ENCODE measurements at regions of chr1 and their contacts with region 1.

Region 1: GRCh38 chr1:36385410-36386257 is at the start of gene STK40:
- DNase-seq: peak; percentile 99
- H3K4me3 Mint-ChIP-seq: peak within 1 kb of the TSS; percentile 92
- H3K27ac Mint-ChIP-seq: peak within 1 kb of the TSS; percentile 99
- H3K4me1 Mint-ChIP-seq: peaks cover 62% of the 10 kb centered on the region
- H3K27me3 Mint-ChIP-seq: no peaks in the 10 kb centered on the region
- total RNA-seq, gene STK40: 40.6 and 51.3 TPM in 2 replicates

Region 2: DNA sequence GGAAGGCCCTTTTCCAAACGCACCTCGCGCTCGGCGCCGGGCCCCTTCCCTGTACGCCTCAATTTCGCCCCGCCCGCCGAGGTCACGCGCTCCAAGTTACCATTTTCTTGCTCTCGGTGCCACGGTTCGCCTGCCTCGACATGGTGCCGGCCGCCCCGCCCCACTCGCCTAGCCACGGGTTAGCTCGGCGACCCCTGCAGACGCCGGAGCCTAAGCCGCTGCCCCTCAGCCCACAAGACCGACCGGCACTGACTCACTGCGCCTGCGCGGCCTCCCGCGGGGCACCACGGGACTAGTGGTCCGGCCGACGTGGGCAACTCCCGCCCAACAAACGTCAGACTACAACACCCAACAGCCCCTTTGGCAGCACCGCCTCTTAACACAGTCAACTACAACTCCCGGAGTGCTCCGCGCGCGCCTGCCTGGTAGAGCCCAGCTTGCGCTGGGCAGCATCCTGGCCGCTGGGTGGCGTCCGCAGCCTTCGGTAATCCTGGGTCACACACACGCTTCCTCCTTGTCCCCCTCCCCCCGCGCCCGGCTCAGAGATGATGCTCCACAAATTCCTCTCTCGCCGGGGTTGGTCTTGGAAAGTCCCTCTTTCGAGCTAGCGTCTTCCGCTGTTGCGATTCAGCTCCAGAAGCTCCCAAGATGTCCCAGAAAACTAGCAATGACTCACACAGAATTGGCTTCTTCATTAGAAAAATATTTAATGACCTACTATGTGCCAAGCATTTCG is 236.2 kb before region 1 on chr1 and contains the start of gene TRAPPC3:
- intact Hi-C with region 1: loop called (anchors 1 kb)
- DNase-seq: peak; percentile 100
- H3K4me3 Mint-ChIP-seq: peak within 1 kb of the TSS; percentile 98
- H3K27ac Mint-ChIP-seq: peak within 1 kb of the TSS; percentile 98
- H3K4me1 Mint-ChIP-seq: peaks cover 54% of the 10 kb centered on the region
- H3K27me3 Mint-ChIP-seq: no peaks in the 10 kb centered on the region
- total RNA-seq, gene TRAPPC3: 71.2 and 72.4 TPM in 2 replicates

Region 3: GRCh38 chr1:36306902-36307456 is 78.7 kb before region 1 on chr1:
- intact Hi-C with region 1: loop called (anchors 5 kb)
- DNase-seq: peak; percentile 99
- H3K4me3 Mint-ChIP-seq: peak overlapping the region; percentile 93
- H3K27ac Mint-ChIP-seq: peak overlapping the region; percentile 95
- H3K4me1 Mint-ChIP-seq: peaks cover 43% of the 10 kb centered on the region
- H3K27me3 Mint-ChIP-seq: no peaks in the 10 kb centered on the region

Region 4: DNA sequence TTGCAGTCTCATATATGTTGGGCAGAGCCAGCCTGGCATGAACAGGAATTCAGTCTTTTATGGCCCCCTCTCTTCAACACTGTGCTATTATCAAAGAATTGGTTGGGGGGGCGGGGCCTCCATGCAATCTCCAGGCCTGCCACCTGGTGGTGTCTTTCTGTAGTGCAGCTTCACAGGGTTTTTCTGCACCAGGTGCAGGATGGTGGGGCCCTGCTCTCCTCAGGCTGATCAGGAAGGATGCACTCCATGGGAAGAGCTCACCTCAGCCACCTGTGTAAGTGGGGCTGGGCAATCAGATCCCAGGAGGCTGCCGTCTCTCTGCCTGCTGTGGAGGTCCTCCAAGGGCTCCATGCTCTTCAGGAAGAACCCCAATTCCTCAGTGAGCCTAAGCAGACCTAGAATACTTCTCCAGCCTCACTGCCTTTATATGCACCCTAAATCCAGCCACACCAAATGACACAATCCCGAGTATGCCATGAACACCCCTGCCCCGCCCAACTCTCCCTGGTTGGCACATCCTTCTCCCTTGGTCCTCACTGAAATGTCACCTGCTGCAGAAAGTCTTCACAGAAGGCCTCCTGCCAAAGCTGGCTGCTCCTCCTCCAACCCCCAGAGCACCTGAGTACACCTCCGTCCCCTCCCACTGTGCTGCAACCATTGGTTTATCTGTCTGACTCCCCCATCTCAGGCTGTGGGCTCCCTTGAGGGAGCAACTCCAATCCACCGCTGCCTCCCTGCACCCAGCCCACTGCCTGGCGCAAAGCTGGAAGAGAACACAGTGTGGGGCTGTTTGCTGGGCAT is 16.4 kb before region 1 on chr1:
- intact Hi-C with region 1: no loop called
- DNase-seq: peak; percentile 95
- H3K4me3 Mint-ChIP-seq: no peak overlapping the region
- H3K27ac Mint-ChIP-seq: peak overlapping the region; percentile 78
- H3K4me1 Mint-ChIP-seq: peaks cover 55% of the 10 kb centered on the region
- H3K27me3 Mint-ChIP-seq: no peaks in the 10 kb centered on the region

Region 5: DNA sequence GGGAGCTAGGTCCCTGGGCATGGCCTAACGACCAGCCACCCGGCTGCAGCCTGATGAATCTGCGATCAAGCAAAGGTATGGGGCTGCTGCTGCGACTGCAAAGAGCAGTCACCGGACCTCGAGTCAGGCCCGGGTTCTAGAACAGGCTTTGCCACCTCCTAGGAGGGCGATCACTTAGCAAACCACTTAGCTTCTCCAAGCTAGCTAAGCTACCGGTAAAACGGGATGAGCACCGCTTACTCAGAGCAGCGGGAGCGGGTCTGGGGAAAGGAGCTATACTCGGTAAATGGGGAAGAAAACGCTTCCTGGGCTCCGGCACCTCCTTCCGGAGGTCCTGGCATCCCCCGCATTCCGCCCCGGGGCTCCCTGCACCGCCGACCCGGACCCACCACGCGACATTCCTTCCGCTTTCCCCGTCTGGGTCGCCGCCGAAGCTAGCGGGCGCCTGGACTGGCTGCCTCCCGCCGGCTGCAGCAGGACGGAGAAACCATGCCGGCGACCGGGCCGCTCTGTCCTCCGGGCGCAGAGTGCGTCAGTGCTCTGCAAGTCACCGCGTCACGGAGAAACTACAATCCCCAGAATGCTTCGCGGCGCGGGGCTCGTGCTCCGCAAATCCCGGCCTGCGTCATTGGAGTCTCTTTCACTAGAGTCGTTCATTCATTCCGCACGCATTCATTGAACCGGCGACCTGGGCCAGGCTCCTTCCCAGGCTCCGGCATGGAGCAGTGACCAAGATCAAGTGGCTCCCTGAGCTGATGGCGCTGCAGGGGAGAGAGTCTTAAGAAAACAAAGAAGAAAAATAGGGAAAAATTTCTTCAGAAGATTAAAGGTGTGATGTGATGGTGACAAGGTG is 12.0 kb after region 1 on chr1 and contains the start of gene LSM10:
- intact Hi-C with region 1: loop called (anchors 1 kb)
- DNase-seq: peak; percentile 97
- H3K4me3 Mint-ChIP-seq: peak within 1 kb of the TSS; percentile 96
- H3K27ac Mint-ChIP-seq: peak within 1 kb of the TSS; percentile 98
- H3K4me1 Mint-ChIP-seq: peaks cover 19% of the 10 kb centered on the region
- H3K27me3 Mint-ChIP-seq: no peaks in the 10 kb centered on the region
- total RNA-seq, gene LSM10: 58.6 and 61.6 TPM in 2 replicates

Region 6: GRCh38 chr1:36463803-36464604 is 78.4 kb after region 1 on chr1 and contains the start of gene MRPS15:
- intact Hi-C with region 1: loop called (anchors 5 kb)
- DNase-seq: peak; percentile 99
- H3K4me3 Mint-ChIP-seq: peak within 1 kb of the TSS; percentile 99
- H3K27ac Mint-ChIP-seq: peak within 1 kb of the TSS; percentile 98
- H3K4me1 Mint-ChIP-seq: peaks cover 39% of the 10 kb centered on the region
- H3K27me3 Mint-ChIP-seq: no peaks in the 10 kb centered on the region
- total RNA-seq, gene MRPS15: 117 and 126 TPM in 2 replicates

Region 7: DNA sequence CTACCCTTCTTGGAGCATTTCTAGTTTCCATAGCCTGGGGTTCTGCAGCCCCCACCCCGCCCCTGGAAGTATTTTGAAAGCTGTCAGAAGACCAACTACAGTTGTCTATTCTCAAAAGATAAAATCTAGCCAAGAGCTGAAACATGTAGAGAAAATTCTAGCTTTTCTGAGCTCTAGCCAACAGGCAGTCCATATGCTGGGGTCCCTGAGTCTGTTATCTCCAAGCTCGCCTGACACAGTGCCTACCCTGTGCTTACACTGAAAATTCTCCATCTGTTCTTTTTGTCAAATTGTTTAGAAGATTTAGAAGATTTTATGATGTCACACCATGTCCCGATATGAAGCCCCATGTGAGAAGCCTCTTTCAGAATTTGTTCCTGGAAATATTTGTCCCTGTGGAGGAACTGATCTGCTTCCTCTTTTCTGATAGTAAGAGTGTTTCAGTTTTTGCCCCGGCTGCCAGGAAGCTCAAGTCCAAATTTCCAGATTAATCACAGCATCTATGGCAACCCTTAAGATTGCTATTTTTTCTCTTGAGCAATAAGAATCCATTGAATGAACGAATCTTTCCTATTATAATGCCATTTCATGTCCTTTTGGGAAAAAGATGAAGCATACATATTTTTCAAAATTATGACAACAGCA is 120.8 kb after region 1 on chr1:
- intact Hi-C with region 1: no loop called
- DNase-seq: no peak
- H3K4me3 Mint-ChIP-seq: no peak overlapping the region
- H3K27ac Mint-ChIP-seq: no peak overlapping the region
- H3K4me1 Mint-ChIP-seq: no peaks in the 10 kb centered on the region
- H3K27me3 Mint-ChIP-seq: peaks cover 25% of the 10 kb centered on the region

Measured in activated CD4-positive, alpha-beta T cell treated with anti-CD3 and anti-CD28 coated beads, Interleukin-2, amount 10 ng/mL, durations not matched to agents 24 days and 14 days (primary cell).